A549 (cell line): ENCODE measurements at regions of chr7 and their contacts with region 1.

Region 1: DNA sequence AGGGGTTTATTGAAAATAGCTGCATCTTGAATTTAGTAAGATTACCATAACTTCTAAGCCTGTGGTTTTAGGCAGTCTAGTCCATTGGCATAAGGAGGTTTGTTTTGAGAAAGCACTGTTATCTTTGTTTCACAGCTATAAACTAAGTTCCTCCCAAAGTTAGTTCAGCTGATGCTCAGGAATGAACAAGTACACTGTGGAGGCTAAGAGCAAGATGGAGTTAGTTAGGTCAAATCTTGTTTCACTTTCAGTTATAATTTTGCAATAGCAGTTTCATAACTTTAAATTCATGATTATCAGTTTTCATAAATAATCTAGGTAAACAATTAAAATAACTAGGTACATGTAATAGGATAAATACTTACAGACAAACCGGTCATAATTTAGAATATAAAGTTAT is 15.4 kb downstream of the SEC61G start:
- DNase-seq: no peak
- ATAC-seq: no peak
- H3K4me3 ChIP-seq: no peak overlapping the region
- H3K27ac ChIP-seq: no peak overlapping the region
- H3K4me1 ChIP-seq: no peaks in the 10 kb centered on the region
- CTCF ChIP-seq: no peak
- EP300 ChIP-seq: no peak
- POLR2A ChIP-seq: no peak
- RAD21 ChIP-seq: no peak

Region 2: DNA sequence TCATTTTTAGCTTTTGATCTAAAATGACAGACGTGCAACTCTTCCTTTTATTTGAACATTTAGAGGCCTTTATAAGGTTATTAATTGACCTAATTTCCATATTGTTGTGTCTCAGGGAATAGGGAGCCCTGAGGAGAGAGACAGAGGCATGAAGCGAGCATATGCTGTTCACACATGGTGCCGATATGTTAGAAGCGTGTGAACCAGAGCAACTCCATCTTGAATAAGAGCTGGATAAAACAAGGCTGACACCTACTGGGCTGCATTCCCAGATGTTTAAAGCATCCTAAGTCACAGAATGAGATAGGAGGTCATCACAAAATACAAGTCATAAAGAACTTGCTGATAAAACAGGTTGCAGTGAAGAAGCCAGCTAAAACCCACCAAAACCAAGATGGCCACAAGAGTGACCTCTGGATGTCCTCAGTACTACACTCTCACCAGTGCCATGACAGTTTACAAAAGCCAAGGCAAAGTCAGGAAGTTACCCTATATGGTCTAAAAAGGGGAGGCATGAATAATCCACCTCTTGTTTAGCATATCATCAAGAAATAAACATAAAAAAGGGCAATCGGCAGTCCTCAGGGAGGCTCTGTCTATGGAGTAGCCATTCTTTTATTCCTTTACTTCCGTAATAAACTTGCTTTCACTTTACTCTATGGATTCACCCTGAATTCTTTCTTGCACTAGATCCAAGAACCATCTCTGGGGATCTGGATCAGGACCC is 64.7 kb before region 1 on chr7:
- CTCF ChIA-PET with region 1: no interaction called
- POLR2A ChIA-PET with region 1: no interaction called
- DNase-seq: peak in 1 of 2 experiments; percentile 18
- ATAC-seq: no peak
- H3K4me3 ChIP-seq: no peak overlapping the region
- H3K27ac ChIP-seq: no peak overlapping the region
- H3K4me1 ChIP-seq: no peaks in the 10 kb centered on the region
- CTCF ChIP-seq: no peak
- EP300 ChIP-seq: no peak
- POLR2A ChIP-seq: no peak
- RAD21 ChIP-seq: peak in 1 of 2 experiments; percentile 23; a peak in 2 of 5 replicates

Region 3: DNA sequence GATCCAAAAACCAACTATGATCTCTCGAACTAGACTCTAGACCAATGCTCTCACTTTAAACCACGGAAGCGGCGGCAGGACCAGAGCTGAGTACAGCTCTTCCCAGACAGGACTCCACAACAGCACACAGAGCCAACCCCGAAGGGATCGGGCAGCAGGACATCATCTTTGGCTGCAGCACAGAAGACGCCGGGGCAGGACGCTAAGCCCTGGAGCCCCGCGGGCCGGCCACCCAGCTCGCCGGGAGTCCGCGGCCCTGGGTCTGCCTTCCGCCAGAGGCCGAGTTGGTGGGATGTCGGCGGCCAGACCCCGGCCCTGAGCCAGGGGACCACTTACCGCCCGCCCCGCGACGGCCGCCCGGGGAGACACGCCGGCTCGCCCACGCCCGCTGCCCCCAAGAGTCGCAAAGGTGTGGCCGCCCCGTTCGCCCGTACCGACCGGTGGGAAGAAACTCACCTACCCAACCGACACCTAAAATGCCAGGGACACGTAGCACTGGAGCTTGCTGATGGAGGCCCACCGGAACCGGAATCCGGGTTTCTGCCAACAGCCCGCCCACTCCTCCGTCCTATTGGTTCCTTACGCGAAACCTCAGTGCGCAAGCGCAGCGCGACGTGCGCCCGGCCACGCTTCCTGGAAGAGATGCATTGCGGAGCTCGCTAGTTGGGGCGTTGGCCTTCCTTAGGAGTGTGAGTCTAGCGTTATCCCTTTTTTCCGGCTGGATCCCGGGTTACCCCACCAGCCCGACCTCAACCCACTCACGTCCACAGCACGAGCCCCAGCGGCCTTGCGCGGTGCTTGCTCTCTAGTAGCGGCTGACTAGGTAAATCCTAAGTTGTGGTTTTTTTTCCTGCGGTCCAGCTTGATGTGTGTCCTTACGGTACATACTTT is 15.4 kb after region 1 on chr7 and contains the start of gene SEC61G:
- CTCF ChIA-PET with region 1: no interaction called
- POLR2A ChIA-PET with region 1: interaction called, 19 read pairs
- DNase-seq: peak; percentile 93 to 97
- ATAC-seq: peak; percentile 93 to 97
- H3K4me3 ChIP-seq: peak within 1 kb of the TSS; percentile 79
- H3K27ac ChIP-seq: peak within 1 kb of the TSS; percentile 93 to 100
- H3K4me1 ChIP-seq: peaks cover 13% of the 10 kb centered on the region; the same call in 2 of the 3 replicates
- CTCF ChIP-seq: no peak
- EP300 ChIP-seq: no peak
- POLR2A ChIP-seq: peak; percentile 84
- RAD21 ChIP-seq: no peak
- polyA plus RNA-seq, gene SEC61G: 290 and 356 TPM in 2 replicates

Region 4: DNA sequence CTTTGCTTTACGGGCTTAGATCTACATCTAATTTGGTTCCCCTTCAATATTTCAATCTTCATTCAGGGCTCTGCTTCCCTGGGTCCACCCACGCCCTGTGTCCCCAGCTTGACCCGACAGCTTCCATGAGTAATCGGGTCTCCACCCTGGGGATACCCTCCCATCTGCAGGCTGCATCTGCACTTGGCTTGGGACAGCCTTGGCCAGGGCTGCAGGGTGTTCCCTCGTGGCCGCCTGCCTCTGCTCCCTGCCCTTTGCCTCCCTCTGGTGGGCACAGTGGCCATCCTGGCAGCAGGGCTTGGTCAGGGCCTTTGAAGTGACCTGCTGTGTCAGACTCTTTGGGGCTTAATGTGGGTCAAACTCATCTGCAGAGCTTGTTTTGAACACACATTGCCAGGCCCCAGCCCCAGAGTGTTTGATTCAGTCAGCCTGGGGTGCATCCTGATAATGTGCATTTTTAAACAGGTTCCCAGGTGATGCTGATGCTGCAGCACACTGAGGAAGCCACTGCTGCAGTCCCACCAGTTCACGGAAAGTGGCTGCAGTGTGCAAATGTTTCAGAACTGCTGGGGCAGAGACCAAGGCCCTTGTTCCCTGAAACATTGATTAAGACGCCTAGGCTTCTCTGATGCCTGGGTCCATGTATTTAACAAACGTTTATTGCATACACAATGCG is 96.1 kb after region 1 on chr7:
- CTCF ChIA-PET with region 1: no interaction called
- POLR2A ChIA-PET with region 1: no interaction called
- DNase-seq: peak; percentile 80 to 81
- ATAC-seq: peak; percentile 99
- H3K4me3 ChIP-seq: no peak overlapping the region
- H3K27ac ChIP-seq: peak overlapping the region; percentile 65 to 71
- H3K4me1 ChIP-seq: peaks cover 52% of the 10 kb centered on the region
- CTCF ChIP-seq: peak; percentile 83
- EP300 ChIP-seq: no peak
- POLR2A ChIP-seq: no peak
- RAD21 ChIP-seq: peak; percentile 94 to 97